Right ventricle myocardium inferior (tissue), 1 donor: ENCODE measurements at regions of chr9 and their contacts with region 1.

Region 1: DNA sequence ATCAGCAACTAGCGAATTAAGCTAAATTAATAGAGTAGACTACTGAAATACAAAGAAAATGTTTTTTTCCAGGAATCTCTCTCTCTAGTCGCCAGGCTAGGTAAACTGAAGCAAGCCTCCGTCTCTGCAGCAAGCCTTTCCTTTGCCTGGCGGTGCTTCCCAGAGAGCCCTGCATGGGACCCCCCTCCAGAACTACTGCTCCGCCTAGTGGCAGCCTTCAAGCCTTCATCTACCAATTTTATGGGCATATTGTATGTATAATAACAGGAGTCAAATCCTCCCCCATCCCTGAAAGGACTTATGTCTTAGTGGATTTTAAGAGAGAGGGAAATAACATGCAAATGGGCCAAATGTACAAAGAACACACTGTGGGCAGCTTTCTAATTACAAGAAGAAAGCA is 241.9 kb downstream of the SAXO1 start:
- DNase-seq: no peak
- ATAC-seq: no peak

Region 2: GRCh38 chr9:18632632-18633403 is 158.3 kb before region 1 on chr9:
- intact Hi-C with region 1: loop called (anchors 10 kb)
- DNase-seq: no peak
- ATAC-seq: peak; percentile 62

Region 3: DNA sequence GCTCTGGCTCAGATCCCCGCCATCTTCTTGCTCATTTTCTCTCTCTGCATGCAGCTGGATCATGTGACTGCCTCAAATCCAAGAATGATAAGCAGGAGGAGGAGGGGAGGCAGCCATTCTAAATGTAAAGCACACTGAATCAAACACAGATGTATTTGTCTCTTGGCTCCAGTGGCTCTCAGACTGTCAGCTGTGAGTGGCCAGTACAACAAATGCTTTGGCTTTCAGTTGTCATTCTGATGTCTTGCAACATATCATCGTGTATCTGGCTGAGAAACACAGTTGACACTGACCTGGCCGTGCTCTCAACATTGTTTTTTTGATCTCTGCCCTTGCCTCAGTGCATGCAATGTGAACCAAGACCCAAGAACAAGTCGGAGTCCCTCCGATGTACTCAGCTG is 84.0 kb before region 1 on chr9:
- intact Hi-C with region 1: loop called (anchors 10 kb)
- DNase-seq: no peak
- ATAC-seq: peak; percentile 56